Activated naive CD4-positive, alpha-beta T cell treated with anti-CD3 and anti-CD28 coated beads for 36 hours (primary cell): ENCODE measurements at regions of chr17 and their contacts with region 1.

Region 1: DNA sequence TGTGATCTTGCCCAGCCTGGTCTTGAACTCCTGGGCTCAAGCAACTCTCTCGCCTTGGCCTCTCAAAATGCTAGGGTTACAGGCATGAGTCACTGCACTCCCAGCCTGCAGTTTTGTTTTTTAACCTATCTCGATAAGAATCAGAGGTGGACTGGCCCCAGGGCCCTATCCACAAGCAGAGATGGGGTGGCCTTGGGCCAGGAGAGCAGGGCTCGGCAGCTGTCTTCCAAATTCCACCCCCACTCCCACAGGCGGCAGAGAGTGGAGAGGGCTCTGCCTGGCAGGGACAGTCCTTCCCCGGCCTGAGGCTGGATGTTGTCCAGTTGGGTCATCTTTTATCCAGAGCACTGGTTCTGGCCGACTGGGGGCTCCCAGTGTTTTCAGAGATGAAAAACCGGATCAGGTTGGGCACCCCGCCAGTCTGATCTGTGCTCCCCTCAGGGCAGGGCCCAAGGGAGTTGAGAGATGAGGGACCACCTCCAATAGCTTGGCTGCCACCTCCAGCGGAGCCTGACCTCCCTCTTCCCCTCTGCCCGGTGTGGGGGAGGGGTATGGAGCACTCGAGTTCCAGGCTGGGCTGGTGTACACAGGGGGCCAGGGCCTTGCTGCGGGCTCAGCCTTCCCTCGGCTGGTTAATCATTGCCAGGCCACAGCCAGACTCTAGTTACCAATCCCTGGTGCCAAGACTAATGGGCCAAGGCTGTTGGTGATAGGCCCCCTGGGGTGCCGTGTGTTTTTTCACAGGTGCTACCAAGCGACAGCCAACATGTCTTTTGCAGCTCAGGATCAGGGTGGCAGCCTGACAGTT is 30.3 kb upstream of the MYO15B start:
- DNase-seq: no peak
- H3K4me3 Mint-ChIP-seq: no peak overlapping the region
- H3K27ac Mint-ChIP-seq: no peak overlapping the region
- H3K4me1 Mint-ChIP-seq: no peaks in the 10 kb centered on the region
- H3K27me3 Mint-ChIP-seq: no peaks in the 10 kb centered on the region

Region 2: DNA sequence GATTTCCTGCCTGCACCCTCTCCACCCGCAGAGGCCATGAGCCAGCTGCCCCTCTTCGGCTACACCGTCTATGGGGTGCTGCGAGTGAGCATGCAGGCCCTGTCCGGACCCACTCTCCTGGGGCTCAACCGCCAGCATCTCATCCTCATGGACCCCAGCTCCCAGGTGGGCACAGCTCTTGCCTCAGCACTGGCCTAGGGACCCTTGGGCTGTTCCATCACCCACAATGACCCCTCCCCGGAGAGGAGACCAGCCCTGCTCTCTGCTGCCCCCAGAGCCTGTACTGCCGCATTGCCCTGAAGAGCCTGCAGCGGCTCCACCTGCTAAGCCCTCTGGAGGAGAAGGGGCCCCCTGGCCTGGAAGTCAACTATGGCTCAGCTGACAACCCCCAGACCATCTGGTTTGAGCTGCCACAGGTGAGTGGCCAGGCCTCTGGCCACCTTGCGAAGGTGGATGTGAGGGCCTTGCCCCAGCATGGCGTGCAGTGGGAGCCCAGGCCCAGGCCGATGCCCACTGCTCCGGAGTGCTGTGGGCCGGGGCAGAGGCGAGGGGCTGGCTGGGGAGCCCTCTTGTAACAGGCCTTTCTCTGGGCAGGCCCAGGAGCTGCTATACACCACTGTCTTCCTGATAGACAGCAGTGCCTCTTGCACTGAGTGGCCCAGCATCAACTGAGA is 68.7 kb after region 1 on chr17:
- CTCF ChIA-PET with region 1: no interaction called
- intact Hi-C with region 1: loop called (anchors 10 kb)
- DNase-seq: peak; percentile 25
- H3K4me3 Mint-ChIP-seq: no peak overlapping the region
- H3K27ac Mint-ChIP-seq: no peak overlapping the region
- H3K4me1 Mint-ChIP-seq: no peaks in the 10 kb centered on the region
- H3K27me3 Mint-ChIP-seq: no peaks in the 10 kb centered on the region